ENCODE measurements at regions of chr9 and their contacts with region 1.

Region 1: DNA sequence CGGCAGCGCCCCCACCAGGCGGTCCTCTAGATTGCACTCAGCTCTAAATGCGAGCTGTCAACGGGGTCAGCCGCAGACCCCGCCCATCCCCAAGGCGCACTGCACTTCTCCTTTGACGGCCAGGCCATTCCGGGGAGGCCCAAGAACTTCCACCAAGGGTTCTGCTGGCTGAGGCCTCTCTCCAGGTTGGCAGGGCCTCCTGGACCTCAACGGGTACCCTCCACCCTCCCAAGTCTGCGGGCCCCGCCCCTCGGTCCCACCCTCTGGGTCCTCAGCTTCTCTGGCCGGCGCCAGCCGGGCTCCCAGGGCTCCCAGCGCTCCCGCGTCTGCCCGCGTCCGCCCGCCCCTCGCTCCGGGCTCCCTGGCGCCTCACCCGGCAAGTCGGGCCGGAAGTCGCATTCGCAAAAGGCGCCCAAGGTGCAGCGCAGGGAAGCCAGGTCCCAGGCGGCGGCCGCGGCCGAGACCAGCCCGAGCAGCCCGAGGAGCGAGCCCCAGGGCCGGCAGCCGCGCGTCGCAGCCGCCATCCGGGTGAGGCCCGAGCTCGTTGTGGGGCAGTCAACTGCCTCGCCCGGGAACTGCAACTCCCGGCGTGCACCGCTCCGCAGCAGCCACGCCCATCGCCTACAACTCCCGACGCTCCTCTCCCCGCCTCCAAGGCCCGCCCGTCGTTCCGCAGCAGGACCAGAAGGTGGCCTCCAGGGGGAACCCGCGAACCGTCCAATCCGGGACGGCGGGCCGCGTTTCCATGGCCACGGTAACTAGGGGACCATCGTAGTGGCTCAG is at the start of gene TOR2A:
- DNase-seq: peak; percentile 96
- ATAC-seq: peak; percentile 92
- H3K4me3 Mint-ChIP-seq: peak within 1 kb of the TSS; percentile 83
- H3K27ac Mint-ChIP-seq: peak within 1 kb of the TSS; percentile 91
- H3K4me1 Mint-ChIP-seq: peaks cover 13% of the 10 kb centered on the region
- H3K27me3 Mint-ChIP-seq: no peaks in the 10 kb centered on the region
- CTCF ChIP-seq: peak; percentile 15
- total RNA-seq, gene TOR2A: 13.8 and 15.1 TPM in 2 replicates

Region 2: DNA sequence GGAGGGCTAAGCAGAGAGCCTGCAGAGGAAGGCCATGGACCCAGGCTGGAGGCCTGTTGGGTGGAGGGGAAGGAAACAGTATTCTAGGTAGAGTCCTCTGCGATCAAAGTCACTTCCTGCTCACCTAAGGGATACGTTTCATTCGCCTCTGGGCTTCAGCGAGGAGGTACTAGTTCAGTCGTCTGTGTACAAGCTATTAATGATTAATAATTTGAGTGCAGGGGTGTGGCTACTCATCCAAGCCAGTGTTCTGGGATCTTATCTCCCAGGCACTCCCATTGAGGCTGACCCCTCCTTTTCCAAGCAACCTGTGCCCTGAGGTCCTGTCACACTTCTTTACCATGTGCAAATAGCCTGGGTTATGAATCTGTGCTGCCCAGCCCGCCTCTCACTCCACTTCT is 795.1 kb before region 1 on chr9:
- CTCF ChIA-PET with region 1: interaction called, 5 read pairs
- POLR2A ChIA-PET with region 1: no interaction called
- intact Hi-C with region 1: loop called (anchors 1 kb)
- DNase-seq: no peak
- ATAC-seq: no peak
- H3K4me3 Mint-ChIP-seq: no peak overlapping the region
- H3K27ac Mint-ChIP-seq: no peak overlapping the region
- H3K4me1 Mint-ChIP-seq: peaks cover 5% of the 10 kb centered on the region
- H3K27me3 Mint-ChIP-seq: no peaks in the 10 kb centered on the region
- CTCF ChIP-seq: no peak

Region 3: DNA sequence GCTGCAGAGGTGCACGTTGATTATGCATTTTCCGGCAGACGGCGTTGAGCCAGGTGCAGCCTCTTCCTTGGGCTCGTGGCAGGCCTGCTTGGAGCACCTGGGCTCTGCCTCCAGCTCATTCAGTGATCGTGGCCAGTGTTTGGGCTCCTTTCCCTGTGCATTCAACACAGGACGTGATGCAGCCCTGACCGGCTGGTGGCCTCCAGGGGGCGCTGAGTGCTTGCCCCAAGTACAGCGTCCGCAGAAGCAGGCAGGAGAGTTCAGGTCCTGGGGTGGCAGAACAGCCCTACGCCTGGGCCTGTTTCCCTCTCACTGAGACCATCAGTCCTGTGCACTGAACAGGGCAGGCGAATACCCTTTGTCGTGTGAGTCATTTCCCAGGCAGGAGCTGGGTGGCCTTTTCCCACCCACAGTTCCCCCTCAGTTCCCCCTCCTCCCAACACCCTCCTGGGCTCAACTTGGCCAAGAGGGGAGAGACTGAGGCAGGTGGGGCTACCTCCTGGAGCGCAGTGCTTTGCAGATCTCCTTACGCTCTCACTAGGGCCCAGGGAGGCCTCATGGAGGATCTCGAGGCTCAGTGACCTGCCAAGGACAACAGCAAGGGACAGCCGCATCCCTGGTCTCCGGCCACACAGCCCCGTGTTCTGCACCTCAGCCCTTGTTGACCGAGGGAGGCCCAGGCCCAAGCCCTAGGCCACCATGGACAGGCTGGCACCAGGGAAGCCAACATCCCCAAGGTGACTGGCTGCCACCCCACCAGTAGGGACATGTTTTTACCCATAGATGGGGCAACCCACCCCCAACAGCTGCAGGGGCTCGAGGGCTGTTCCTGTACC is 230.8 kb before region 1 on chr9:
- CTCF ChIA-PET with region 1: interaction called, 12 read pairs
- POLR2A ChIA-PET with region 1: interaction called, 3 read pairs
- intact Hi-C with region 1: loop called (anchors 1 kb)
- DNase-seq: peak; percentile 60
- ATAC-seq: peak; percentile 93
- H3K4me3 Mint-ChIP-seq: no peak overlapping the region
- H3K27ac Mint-ChIP-seq: no peak overlapping the region
- H3K4me1 Mint-ChIP-seq: no peaks in the 10 kb centered on the region
- H3K27me3 Mint-ChIP-seq: no peaks in the 10 kb centered on the region
- CTCF ChIP-seq: no peak

Region 4: GRCh38 chr9:127698985-127699670 is 35.8 kb before region 1 on chr9:
- CTCF ChIA-PET with region 1: no interaction called
- POLR2A ChIA-PET with region 1: no interaction called
- intact Hi-C with region 1: loop called (anchors 1 kb)
- DNase-seq: peak; percentile 76
- ATAC-seq: peak; percentile 100
- H3K4me3 Mint-ChIP-seq: peak overlapping the region; percentile 83
- H3K27ac Mint-ChIP-seq: peak overlapping the region; percentile 78
- H3K4me1 Mint-ChIP-seq: peaks cover 16% of the 10 kb centered on the region
- H3K27me3 Mint-ChIP-seq: no peaks in the 10 kb centered on the region
- CTCF ChIP-seq: no peak

Region 5: DNA sequence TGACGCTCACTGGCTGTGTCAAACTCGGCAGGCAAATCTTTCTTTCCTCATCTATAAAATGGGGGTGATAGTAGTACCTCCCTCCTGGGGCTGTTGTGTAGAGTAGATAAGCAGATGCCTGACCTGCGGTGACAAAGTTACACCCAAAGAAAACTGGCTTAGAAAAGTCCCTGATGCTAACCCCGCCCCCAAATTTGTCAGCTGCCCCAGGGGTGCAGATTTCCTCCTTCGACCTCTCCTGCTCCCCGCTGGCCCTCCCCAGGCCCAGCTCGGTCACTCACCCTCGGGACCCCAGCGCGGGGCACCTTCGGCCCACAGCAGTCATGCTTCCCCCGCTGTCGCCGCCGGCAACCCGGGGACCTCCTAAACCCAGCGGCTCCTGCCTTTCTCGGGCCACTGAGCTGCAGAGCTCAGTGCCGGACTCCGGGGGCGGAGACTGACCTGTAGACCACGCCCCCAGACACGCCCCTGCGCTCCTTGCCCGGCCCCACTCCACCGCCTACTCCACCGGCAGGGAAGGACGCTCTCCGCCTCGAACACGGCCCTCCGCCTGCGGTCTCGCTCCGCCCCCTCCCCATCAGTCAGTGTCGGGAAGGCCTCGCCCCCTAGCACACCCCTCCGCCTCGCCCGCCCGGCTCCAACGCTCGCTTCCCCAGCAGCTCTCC is 36.1 kb after region 1 on chr9:
- CTCF ChIA-PET with region 1: interaction called, 11 read pairs
- POLR2A ChIA-PET with region 1: interaction called, 21 read pairs
- intact Hi-C with region 1: loop called (anchors 1 kb)
- DNase-seq: peak; percentile 98
- ATAC-seq: peak; percentile 90
- H3K4me3 Mint-ChIP-seq: peak overlapping the region; percentile 93
- H3K27ac Mint-ChIP-seq: peak overlapping the region; percentile 93
- H3K4me1 Mint-ChIP-seq: peaks cover 72% of the 10 kb centered on the region
- H3K27me3 Mint-ChIP-seq: no peaks in the 10 kb centered on the region
- CTCF ChIP-seq: no peak

Region 6: GRCh38 chr9:127785023-127785932 is 50.3 kb after region 1 on chr9:
- CTCF ChIA-PET with region 1: interaction called, 39 read pairs
- POLR2A ChIA-PET with region 1: interaction called, 24 read pairs
- intact Hi-C with region 1: loop called (anchors 1 kb)
- DNase-seq: peak; percentile 92
- ATAC-seq: peak; percentile 56
- H3K4me3 Mint-ChIP-seq: peak overlapping the region; percentile 92
- H3K27ac Mint-ChIP-seq: peak overlapping the region; percentile 97
- H3K4me1 Mint-ChIP-seq: peaks cover 63% of the 10 kb centered on the region
- H3K27me3 Mint-ChIP-seq: no peaks in the 10 kb centered on the region
- CTCF ChIP-seq: peak; percentile 43

Region 7: DNA sequence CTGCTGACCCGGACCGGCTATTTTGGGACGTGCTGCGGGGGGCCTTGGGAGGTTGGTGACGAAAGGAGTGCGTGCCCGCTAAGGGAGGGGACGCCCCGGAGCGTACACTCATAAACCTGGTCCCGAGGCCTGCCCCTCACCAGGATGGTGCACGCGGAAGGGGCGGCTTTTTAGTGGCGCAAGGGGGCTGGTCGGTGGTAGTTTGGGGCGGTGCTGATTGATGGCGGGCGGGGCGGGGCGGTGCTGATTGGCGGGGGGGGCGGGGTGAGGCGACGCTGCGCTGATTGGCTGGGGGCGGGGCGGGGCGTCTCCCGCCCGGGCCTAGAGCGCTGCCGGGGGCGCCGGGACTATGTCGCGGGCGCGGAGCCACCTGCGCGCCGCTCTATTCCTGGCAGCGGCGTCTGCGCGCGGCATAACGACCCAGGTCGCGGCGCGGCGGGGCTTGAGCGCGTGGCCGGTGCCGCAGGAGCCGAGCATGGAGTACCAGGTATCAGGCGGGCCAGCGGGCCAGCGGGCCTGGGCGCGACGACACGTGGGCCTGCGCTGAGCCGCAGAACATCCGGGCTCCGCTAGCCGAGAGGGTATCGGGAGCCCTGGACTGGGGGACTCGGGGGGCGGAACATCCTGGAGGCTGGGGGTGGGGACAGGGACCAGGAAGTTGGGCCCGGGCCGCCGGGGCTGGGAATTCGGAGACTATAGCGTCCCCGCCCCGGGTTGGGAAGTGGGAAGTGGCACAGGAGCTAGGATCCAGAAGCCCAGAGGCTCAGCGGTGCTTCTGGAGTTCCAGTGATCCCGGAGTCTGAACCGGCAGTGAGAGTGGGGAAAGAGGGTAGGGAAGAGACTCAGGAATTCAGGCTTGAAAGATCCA is 67.9 kb after region 1 on chr9 and contains the start of gene FPGS:
- CTCF ChIA-PET with region 1: interaction called, 5 read pairs
- POLR2A ChIA-PET with region 1: interaction called, 3 read pairs
- intact Hi-C with region 1: loop called (anchors 1 kb)
- DNase-seq: peak; percentile 81
- ATAC-seq: peak; percentile 84
- H3K4me3 Mint-ChIP-seq: peak within 1 kb of the TSS; percentile 93
- H3K27ac Mint-ChIP-seq: peak within 1 kb of the TSS; percentile 87
- H3K4me1 Mint-ChIP-seq: peaks cover 32% of the 10 kb centered on the region
- H3K27me3 Mint-ChIP-seq: no peaks in the 10 kb centered on the region
- CTCF ChIP-seq: no peak
- total RNA-seq, gene FPGS: 105 and 135 TPM in 2 replicates